B cell (primary cell): ENCODE measurements at regions of chr6 and their contacts with region 1.

Region 1: DNA sequence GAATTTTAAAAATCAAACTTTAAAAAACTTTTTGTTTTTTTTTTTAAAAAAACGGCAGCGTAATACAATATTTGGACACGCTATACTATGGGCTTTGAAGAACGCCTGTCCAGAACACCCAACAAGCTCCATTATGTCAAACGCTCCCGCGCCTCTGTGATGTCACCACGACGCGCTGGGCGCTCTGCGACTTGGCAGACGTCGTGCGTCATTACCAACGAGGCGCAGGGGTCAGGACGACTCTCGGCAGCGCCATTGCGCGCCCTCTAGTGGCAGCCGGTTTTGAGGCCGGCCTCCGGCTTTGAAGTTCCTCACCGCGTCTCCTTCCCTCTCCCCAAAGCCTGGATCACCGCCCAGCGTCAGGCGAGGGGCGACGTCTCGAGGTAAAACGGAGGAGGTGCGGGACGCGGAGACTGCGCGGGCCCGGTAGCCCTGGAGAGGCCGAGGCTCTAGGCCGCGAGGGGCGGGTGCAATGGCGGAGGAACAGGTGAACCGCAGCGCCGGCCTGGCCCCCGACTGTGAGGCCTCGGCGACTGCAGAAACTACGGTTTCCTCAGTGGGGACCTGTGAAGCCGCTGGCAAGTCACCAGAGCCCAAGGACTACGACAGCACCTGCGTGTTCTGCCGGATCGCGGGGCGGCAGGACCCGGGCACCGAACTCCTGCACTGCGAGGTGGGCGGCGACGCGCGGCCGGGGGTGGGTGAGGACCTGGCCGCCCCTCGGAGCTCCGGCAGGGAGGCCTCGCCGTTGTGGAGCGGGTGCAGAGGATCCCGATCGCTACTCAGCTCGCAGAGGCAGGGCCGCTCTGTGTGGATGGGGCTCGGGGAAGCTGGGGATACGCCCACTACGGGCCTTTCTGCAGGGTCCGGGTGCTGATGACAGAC is at the start of gene HINT3:
- DNase-seq: peak; percentile 98
- ATAC-seq: peak; percentile 86
- H3K4me3 ChIP-seq: peak within 1 kb of the TSS; percentile 50 to 96 (median 87)
- H3K4me3 Mint-ChIP-seq: no peak within 1 kb of the TSS
- H3K27ac ChIP-seq: peak within 1 kb of the TSS; percentile 97 to 98
- H3K27ac Mint-ChIP-seq: peak within 1 kb of the TSS; percentile 71
- H3K4me1 ChIP-seq: peaks cover 27% of the 10 kb centered on the region in 2 donors
- H3K4me1 Mint-ChIP-seq: peaks cover 8% of the 10 kb centered on the region
- H3K27me3 ChIP-seq: no peaks in the 10 kb centered on the region
- H3K27me3 Mint-ChIP-seq: peaks cover 8% of the 10 kb centered on the region
- CTCF ChIP-seq: peak; percentile 99
- total RNA-seq, gene HINT3: 10.7 and 12.4 TPM in 2 replicates

Region 2: DNA sequence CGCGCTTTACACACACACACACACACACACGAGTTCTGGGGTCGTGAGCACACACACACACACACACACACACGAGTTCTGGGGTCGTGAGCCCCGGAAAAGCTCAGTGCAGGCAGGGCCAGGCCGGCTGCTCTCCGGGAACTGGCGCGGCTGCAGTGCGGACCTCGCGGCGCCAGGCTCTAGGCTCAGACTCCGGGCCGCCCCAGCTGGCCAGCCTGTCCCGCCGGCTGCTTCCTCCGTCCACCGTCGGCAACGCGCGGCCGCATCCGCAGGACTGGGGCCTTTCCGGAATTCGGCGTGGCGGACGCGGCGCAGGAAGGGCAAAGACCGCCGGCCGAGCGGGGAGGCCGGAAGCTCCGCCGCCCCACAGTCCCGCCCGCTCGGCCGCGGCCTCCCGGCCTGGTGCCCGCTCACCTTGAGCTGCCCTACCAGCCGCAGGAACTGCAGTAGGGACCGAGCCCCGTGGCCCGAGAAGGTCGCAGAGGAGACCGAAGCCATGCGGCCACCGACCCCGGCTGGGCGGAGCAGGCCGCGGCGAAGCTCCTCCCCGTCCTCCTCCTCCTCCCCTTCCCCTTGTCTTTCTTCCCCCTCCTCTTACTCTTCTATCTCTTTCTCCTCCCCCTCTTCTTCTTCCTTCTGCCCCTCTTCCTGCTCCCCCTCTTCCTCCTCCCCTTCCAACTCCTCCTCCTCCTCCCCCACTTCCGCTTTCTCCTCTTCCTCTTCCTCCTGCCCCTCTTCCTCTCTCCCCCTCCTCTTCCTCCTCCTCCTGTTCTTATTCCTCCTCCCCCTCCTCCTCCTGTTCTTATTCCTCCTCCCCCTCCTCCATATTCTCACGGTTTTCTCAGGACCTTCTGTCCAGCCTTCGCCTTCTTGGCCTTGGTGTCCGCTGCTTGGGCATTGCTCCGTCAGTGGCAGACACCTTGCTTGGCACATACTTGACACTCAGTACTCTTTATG is 655.0 kb before region 1 on chr6 and contains the start of gene HDDC2:
- CTCF ChIA-PET with region 1: interaction called, 5 read pairs
- POLR2A ChIA-PET with region 1: interaction called, 3 read pairs
- intact Hi-C with region 1: loop called (anchors 2 kb)
- DNase-seq: peak; percentile 63
- ATAC-seq: peak; percentile 72
- H3K4me3 ChIP-seq: peak within 1 kb of the TSS; percentile 61 to 85 (median 81)
- H3K4me3 Mint-ChIP-seq: peak within 1 kb of the TSS; percentile 93
- H3K27ac ChIP-seq: peak within 1 kb of the TSS; percentile 38 to 81
- H3K27ac Mint-ChIP-seq: peak within 1 kb of the TSS; percentile 87
- H3K4me1 ChIP-seq: peaks cover 16% of the 10 kb centered on the region in 2 donors
- H3K4me1 Mint-ChIP-seq: peaks cover 43% of the 10 kb centered on the region
- H3K27me3 ChIP-seq: peaks cover 0 to 8% (median 0%) of the 10 kb centered on the region in 4 experiments
- H3K27me3 Mint-ChIP-seq: peaks cover 18% of the 10 kb centered on the region
- CTCF ChIP-seq: no peak
- total RNA-seq, gene HDDC2: 31.6 and 38.4 TPM in 2 replicates

Region 3: DNA sequence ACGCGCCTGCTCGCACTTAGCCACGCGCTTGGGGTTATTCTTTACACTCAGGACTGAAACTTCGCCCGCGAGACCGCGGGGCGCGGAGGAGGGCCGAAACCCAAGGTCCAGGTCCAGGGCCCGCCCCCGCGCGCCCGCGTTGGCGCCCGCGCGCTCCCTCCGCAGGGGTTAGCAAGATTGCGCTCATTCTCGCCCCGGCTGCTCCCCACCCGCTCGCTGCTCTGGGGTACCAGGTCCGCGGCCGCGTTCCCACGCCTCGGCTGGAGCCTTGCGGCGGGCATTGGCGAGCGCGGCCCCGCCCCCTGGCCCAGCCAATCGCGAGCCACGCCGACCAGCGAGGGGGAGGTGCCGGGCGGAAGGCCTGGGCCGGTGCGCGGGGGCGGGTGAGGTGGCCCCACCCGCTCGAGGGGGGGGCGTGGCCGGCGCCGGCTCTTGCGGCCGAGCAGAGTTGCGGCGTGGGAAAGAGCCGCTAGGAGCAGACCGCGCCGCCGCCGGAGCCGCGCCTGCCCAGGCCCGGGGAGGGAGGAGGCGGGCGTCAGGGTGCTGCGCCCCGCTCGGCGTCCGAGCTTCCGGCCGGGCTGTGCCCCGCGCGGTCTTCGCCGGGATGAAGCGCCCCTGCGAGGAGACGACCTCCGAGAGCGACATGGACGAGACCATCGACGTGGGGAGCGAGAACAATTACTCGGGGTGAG is 207.4 kb before region 1 on chr6 and contains the start of gene HEY2:
- CTCF ChIA-PET with region 1: interaction called, 4 read pairs
- POLR2A ChIA-PET with region 1: no interaction called
- intact Hi-C with region 1: loop called (anchors 1 kb)
- DNase-seq: peak; percentile 92
- ATAC-seq: peak; percentile 94
- H3K4me3 ChIP-seq: peak within 1 kb of the TSS; percentile 44 to 75 (median 67)
- H3K4me3 Mint-ChIP-seq: peak within 1 kb of the TSS; percentile 96
- H3K27ac ChIP-seq: peak within 1 kb of the TSS in 1 of 2 donors; percentile 37
- H3K27ac Mint-ChIP-seq: peak within 1 kb of the TSS; percentile 83
- H3K4me1 ChIP-seq: peaks cover 35 to 42% of the 10 kb centered on the region in 2 donors
- H3K4me1 Mint-ChIP-seq: peaks cover 37% of the 10 kb centered on the region
- H3K27me3 ChIP-seq: peaks cover 0 to 58% (median 50%) of the 10 kb centered on the region in 4 experiments
- H3K27me3 Mint-ChIP-seq: peaks cover 61% of the 10 kb centered on the region
- CTCF ChIP-seq: no peak
- total RNA-seq, gene HEY2: not detected in 2 replicates

Region 4: GRCh38 chr6:125790358-125791150 is 166.2 kb before region 1 on chr6 and contains the start of gene NCOA7:
- CTCF ChIA-PET with region 1: interaction called, 130 read pairs
- POLR2A ChIA-PET with region 1: interaction called, 22 read pairs
- intact Hi-C with region 1: loop called (anchors 1 kb)
- DNase-seq: peak; percentile 85
- ATAC-seq: peak; percentile 77
- H3K4me3 ChIP-seq: peak within 1 kb of the TSS; percentile 47 to 88 (median 78)
- H3K4me3 Mint-ChIP-seq: peak within 1 kb of the TSS; percentile 93
- H3K27ac ChIP-seq: peak within 1 kb of the TSS; percentile 70 to 85
- H3K27ac Mint-ChIP-seq: peak within 1 kb of the TSS; percentile 99
- H3K4me1 ChIP-seq: peaks cover 20 to 30% of the 10 kb centered on the region in 2 donors
- H3K4me1 Mint-ChIP-seq: peaks cover 49% of the 10 kb centered on the region
- H3K27me3 ChIP-seq: no peaks in the 10 kb centered on the region
- H3K27me3 Mint-ChIP-seq: peaks cover under 1% of the 10 kb centered on the region
- CTCF ChIP-seq: no peak
- total RNA-seq, gene NCOA7: 27.0 and 27.4 TPM in 2 replicates

Region 5: GRCh38 chr6:125918681-125919566 is 37.8 kb before region 1 on chr6:
- CTCF ChIA-PET with region 1: interaction called, 15 read pairs
- POLR2A ChIA-PET with region 1: no interaction called
- intact Hi-C with region 1: loop called (anchors 1 kb)
- DNase-seq: peak; percentile 81
- ATAC-seq: peak; percentile 88
- H3K4me3 ChIP-seq: peak overlapping the region; percentile 19 to 51 (median 33)
- H3K4me3 Mint-ChIP-seq: peak overlapping the region; percentile 75
- H3K27ac ChIP-seq: peak overlapping the region; percentile 50 to 85
- H3K27ac Mint-ChIP-seq: peak overlapping the region; percentile 72
- H3K4me1 ChIP-seq: peaks cover 13 to 14% of the 10 kb centered on the region in 2 donors
- H3K4me1 Mint-ChIP-seq: peaks cover 21% of the 10 kb centered on the region
- H3K27me3 ChIP-seq: no peaks in the 10 kb centered on the region
- H3K27me3 Mint-ChIP-seq: no peaks in the 10 kb centered on the region
- CTCF ChIP-seq: no peak

Region 6: GRCh38 chr6:125974214-125974866 is 17.6 kb after region 1 on chr6:
- CTCF ChIA-PET with region 1: interaction called, 32 read pairs
- POLR2A ChIA-PET with region 1: no interaction called
- intact Hi-C with region 1: loop called (anchors 1 kb)
- DNase-seq: peak; percentile 67
- ATAC-seq: peak; percentile 56
- H3K4me3 ChIP-seq: no peak overlapping the region
- H3K4me3 Mint-ChIP-seq: no peak overlapping the region
- H3K27ac ChIP-seq: peak overlapping the region in 1 of 2 donors; percentile 38
- H3K27ac Mint-ChIP-seq: no peak overlapping the region
- H3K4me1 ChIP-seq: peaks cover 0 to 4% of the 10 kb centered on the region in 2 donors
- H3K4me1 Mint-ChIP-seq: peaks cover 14% of the 10 kb centered on the region
- H3K27me3 ChIP-seq: no peaks in the 10 kb centered on the region
- H3K27me3 Mint-ChIP-seq: no peaks in the 10 kb centered on the region
- CTCF ChIP-seq: peak; percentile 79

Region 7: GRCh38 chr6:125995972-125996580 is 39.3 kb after region 1 on chr6:
- CTCF ChIA-PET with region 1: interaction called, 17 read pairs
- POLR2A ChIA-PET with region 1: no interaction called
- intact Hi-C with region 1: no loop called
- DNase-seq: peak; percentile 81
- ATAC-seq: peak; percentile 99
- H3K4me3 ChIP-seq: peak overlapping the region in 2 of 5 experiments; percentile 31 to 56
- H3K4me3 Mint-ChIP-seq: peak overlapping the region; percentile 78
- H3K27ac ChIP-seq: no peak overlapping the region
- H3K27ac Mint-ChIP-seq: no peak overlapping the region
- H3K4me1 ChIP-seq: peaks cover 0 to 4% of the 10 kb centered on the region in 2 donors
- H3K4me1 Mint-ChIP-seq: peaks cover 8% of the 10 kb centered on the region
- H3K27me3 ChIP-seq: no peaks in the 10 kb centered on the region
- H3K27me3 Mint-ChIP-seq: no peaks in the 10 kb centered on the region
- CTCF ChIP-seq: peak; percentile 100